B cell (primary cell): ENCODE measurements at regions of chr11 and their contacts with region 1.

Region 1: GRCh38 chr11:85627998-85628770 is at the start of gene TMEM126B:
- DNase-seq: peak; percentile 95
- ATAC-seq: peak; percentile 98
- H3K4me3 ChIP-seq: peak within 1 kb of the TSS; percentile 75 to 99 (median 85)
- H3K4me3 Mint-ChIP-seq: peak within 1 kb of the TSS; percentile 99
- H3K27ac ChIP-seq: peak within 1 kb of the TSS; percentile 65 to 87
- H3K27ac Mint-ChIP-seq: peak within 1 kb of the TSS; percentile 96
- H3K4me1 ChIP-seq: peaks cover 14 to 19% of the 10 kb centered on the region in 2 donors
- H3K4me1 Mint-ChIP-seq: peaks cover 28% of the 10 kb centered on the region
- H3K27me3 ChIP-seq: no peaks in the 10 kb centered on the region
- H3K27me3 Mint-ChIP-seq: peaks cover 5% of the 10 kb centered on the region
- CTCF ChIP-seq: no peak
- total RNA-seq, gene TMEM126B: 37.2 and 38.5 TPM in 2 replicates

Region 2: GRCh38 chr11:84691830-84692229 is 936.4 kb before region 1 on chr11:
- CTCF ChIA-PET with region 1: no interaction called
- POLR2A ChIA-PET with region 1: no interaction called
- intact Hi-C with region 1: no loop called
- DNase-seq: no peak
- ATAC-seq: no peak
- H3K4me3 ChIP-seq: no peak overlapping the region
- H3K4me3 Mint-ChIP-seq: no peak overlapping the region
- H3K27ac ChIP-seq: no peak overlapping the region
- H3K27ac Mint-ChIP-seq: no peak overlapping the region
- H3K4me1 ChIP-seq: no peaks in the 10 kb centered on the region
- H3K4me1 Mint-ChIP-seq: no peaks in the 10 kb centered on the region
- H3K27me3 ChIP-seq: no peaks in the 10 kb centered on the region
- H3K27me3 Mint-ChIP-seq: no peaks in the 10 kb centered on the region
- CTCF ChIP-seq: no peak

Region 3: GRCh38 chr11:85551881-85552280 is 76.3 kb before region 1 on chr11:
- CTCF ChIA-PET with region 1: no interaction called
- POLR2A ChIA-PET with region 1: no interaction called
- intact Hi-C with region 1: no loop called
- DNase-seq: no peak
- ATAC-seq: no peak
- H3K4me3 ChIP-seq: no peak overlapping the region
- H3K4me3 Mint-ChIP-seq: no peak overlapping the region
- H3K27ac ChIP-seq: no peak overlapping the region
- H3K27ac Mint-ChIP-seq: no peak overlapping the region
- H3K4me1 ChIP-seq: no peaks in the 10 kb centered on the region
- H3K4me1 Mint-ChIP-seq: no peaks in the 10 kb centered on the region
- H3K27me3 ChIP-seq: no peaks in the 10 kb centered on the region
- H3K27me3 Mint-ChIP-seq: peaks cover 6% of the 10 kb centered on the region
- CTCF ChIP-seq: no peak

Region 4: DNA sequence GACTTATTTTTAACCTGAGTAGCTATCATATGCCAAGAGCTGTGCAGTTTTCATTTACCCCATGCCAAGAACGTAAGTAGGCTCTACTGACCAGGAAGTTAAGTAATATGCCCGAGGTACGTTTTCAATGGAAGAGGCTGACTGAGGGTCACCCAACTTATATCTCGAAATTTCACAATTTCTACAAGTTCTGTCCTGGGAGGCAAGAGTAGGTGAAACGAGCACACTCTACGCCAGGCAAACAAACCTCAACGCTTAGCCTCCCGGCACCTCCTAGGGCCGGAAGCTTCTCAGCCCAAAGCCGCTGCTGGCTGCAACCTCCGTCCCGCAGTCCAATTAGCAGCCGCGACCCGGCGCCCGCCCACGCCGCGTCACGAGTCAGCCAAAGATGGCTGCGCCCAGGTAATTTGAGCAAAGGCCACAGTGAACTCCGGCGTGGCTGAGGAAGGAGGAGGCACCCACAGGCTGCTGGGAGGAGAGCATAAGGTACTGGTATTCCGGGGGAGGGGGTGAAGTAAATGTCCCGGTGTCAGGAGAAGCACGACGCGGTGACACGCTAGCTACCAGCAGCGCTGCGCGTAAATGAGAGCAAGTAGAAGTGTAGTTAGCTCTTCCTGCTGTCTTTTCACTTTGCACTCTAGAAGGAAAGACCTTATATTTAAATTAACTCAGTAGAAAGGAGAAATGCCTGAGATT is 19.6 kb after region 1 on chr11 and contains the start of gene TMEM126A:
- CTCF ChIA-PET with region 1: interaction called, 8 read pairs
- POLR2A ChIA-PET with region 1: interaction called, 20 read pairs
- intact Hi-C with region 1: loop called (anchors 1 kb)
- DNase-seq: peak; percentile 91
- ATAC-seq: peak; percentile 99
- H3K4me3 ChIP-seq: peak within 1 kb of the TSS; percentile 79 to 87 (median 85)
- H3K4me3 Mint-ChIP-seq: peak within 1 kb of the TSS; percentile 89
- H3K27ac ChIP-seq: peak within 1 kb of the TSS; percentile 71 to 91
- H3K27ac Mint-ChIP-seq: peak within 1 kb of the TSS; percentile 93
- H3K4me1 ChIP-seq: peaks cover 12 to 13% of the 10 kb centered on the region in 2 donors
- H3K4me1 Mint-ChIP-seq: peaks cover 18% of the 10 kb centered on the region
- H3K27me3 ChIP-seq: peaks cover 0 to 12% (median 4%) of the 10 kb centered on the region in 4 experiments
- H3K27me3 Mint-ChIP-seq: peaks cover 19% of the 10 kb centered on the region
- CTCF ChIP-seq: no peak
- total RNA-seq, gene TMEM126A: 13.0 and 15.8 TPM in 2 replicates

Region 5: GRCh38 chr11:85682330-85683305 is 54.4 kb after region 1 on chr11:
- CTCF ChIA-PET with region 1: no interaction called
- POLR2A ChIA-PET with region 1: no interaction called
- intact Hi-C with region 1: loop called (anchors 5 kb)
- DNase-seq: peak; percentile 70
- ATAC-seq: peak; percentile 95
- H3K4me3 ChIP-seq: peak overlapping the region; percentile 62 to 96 (median 77)
- H3K4me3 Mint-ChIP-seq: peak overlapping the region; percentile 87
- H3K27ac ChIP-seq: peak overlapping the region; percentile 31 to 72
- H3K27ac Mint-ChIP-seq: peak overlapping the region; percentile 85
- H3K4me1 ChIP-seq: peaks cover 0 to 4% of the 10 kb centered on the region in 2 donors
- H3K4me1 Mint-ChIP-seq: peaks cover 17% of the 10 kb centered on the region
- H3K27me3 ChIP-seq: peaks cover 0 to 9% (median 0%) of the 10 kb centered on the region in 4 experiments
- H3K27me3 Mint-ChIP-seq: peaks cover 9% of the 10 kb centered on the region
- CTCF ChIP-seq: no peak

Region 6: GRCh38 chr11:85810871-85811611 is 182.9 kb after region 1 on chr11 and contains the start of gene SYTL2:
- CTCF ChIA-PET with region 1: no interaction called
- POLR2A ChIA-PET with region 1: no interaction called
- intact Hi-C with region 1: loop called (anchors 2 kb)
- DNase-seq: peak; percentile 64
- ATAC-seq: peak; percentile 98
- H3K4me3 ChIP-seq: peak within 1 kb of the TSS; percentile 39 to 70 (median 59)
- H3K4me3 Mint-ChIP-seq: peak within 1 kb of the TSS; percentile 88
- H3K27ac ChIP-seq: no peak within 1 kb of the TSS
- H3K27ac Mint-ChIP-seq: peak within 1 kb of the TSS; percentile 20
- H3K4me1 ChIP-seq: peaks cover 16 to 25% of the 10 kb centered on the region in 2 donors
- H3K4me1 Mint-ChIP-seq: peaks cover 23% of the 10 kb centered on the region
- H3K27me3 ChIP-seq: peaks cover 0 to 30% (median 3%) of the 10 kb centered on the region in 4 experiments
- H3K27me3 Mint-ChIP-seq: peaks cover 24% of the 10 kb centered on the region
- CTCF ChIP-seq: no peak
- total RNA-seq, gene SYTL2: 2.3 and 2.9 TPM in 2 replicates

Region 7: DNA sequence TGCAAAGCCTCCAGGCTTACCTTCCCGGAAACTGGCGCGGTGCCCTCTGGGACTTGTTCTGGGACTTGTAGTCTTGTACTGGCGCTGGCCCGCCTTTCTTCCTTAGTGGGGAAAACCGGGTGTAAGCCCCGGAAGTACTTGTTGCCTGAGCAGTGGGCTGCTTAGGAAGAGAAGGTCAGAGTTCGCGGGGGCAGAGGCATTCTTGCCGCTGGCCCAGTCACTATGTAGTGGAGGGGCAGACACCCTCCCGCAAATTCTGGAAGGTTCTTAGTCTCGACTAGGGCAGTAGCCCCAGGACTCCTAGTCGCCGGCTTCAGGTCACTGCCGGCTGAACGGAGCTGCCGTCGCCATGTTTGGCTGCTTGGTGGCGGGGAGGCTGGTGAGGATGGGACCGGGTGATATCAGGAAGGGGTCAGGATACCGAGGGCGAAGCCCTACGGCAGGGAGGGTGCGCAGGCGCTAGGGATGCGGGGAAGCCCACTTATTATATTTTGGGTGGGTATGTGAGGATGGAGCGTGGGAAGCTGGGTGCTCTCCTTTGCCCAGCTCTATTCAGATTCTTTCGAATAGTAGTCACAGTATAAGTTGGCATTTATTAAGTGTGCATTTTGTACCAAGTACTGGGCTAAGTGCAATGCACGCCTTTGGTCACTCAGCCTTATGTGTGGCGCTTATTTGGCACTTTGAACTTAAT is 674.1 kb after region 1 on chr11 and contains the start of gene HIKESHI:
- CTCF ChIA-PET with region 1: no interaction called
- POLR2A ChIA-PET with region 1: no interaction called
- intact Hi-C with region 1: loop called (anchors 2 kb)
- DNase-seq: peak; percentile 90
- ATAC-seq: peak; percentile 99
- H3K4me3 ChIP-seq: peak within 1 kb of the TSS; percentile 70 to 96 (median 92)
- H3K4me3 Mint-ChIP-seq: peak within 1 kb of the TSS; percentile 98
- H3K27ac ChIP-seq: peak within 1 kb of the TSS; percentile 70 to 95
- H3K27ac Mint-ChIP-seq: peak within 1 kb of the TSS; percentile 95
- H3K4me1 ChIP-seq: peaks cover 10 to 13% of the 10 kb centered on the region in 2 donors
- H3K4me1 Mint-ChIP-seq: peaks cover 20% of the 10 kb centered on the region
- H3K27me3 ChIP-seq: no peaks in the 10 kb centered on the region
- H3K27me3 Mint-ChIP-seq: no peaks in the 10 kb centered on the region
- CTCF ChIP-seq: no peak
- total RNA-seq, gene HIKESHI: 23.3 and 24.4 TPM in 2 replicates